ENCODE measurements at regions of chr7 and their contacts with region 1.

Region 1: GRCh38 chr7:129611246-129612111 is at the start of gene NRF1:
- DNase-seq: peak; percentile 77 to 97 (median 85)

Region 2: DNA sequence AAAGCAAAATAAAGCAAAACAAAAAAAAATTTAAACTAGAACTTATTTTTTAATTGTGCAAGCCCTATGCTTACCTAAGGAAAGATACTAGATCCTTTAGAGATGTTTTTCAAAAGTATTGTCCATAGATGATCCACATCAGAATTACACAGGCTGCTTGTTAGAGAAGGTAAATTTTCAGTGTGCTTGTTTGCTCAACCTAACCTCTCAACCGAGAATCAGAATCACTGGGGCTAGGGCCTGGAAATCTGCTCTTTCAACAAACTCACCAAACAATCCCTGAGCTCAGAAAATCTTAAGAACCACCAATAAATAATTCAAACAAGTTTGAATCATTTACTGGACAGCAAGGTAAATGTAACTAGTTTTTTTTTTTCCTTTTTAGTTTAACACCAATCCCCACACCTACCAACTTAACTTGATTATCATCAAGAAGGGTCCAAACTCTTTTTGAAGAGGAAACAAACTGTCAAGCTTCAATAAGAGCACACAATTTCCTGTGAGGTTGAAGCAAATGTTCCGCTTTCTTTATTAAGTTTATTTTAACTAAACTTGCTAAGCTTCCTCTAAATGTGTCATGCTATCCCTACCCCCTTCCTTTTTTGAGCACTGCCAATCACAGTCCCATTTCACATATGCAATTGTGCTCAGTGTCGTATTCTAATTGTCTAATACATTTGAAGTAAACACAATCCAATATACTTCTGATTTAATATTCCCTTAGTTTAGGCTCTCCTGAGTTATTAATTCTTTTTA is 474.4 kb before region 1 on chr7:
- intact Hi-C with region 1: no loop called
- DNase-seq: no peak

Region 3: GRCh38 chr7:129224251-129225205 is 387.0 kb before region 1 on chr7 and contains the start of gene AHCYL2:
- intact Hi-C with region 1: loop called (anchors 10 kb)
- DNase-seq: peak; percentile 94 to 100 (median 98)

Region 4: DNA sequence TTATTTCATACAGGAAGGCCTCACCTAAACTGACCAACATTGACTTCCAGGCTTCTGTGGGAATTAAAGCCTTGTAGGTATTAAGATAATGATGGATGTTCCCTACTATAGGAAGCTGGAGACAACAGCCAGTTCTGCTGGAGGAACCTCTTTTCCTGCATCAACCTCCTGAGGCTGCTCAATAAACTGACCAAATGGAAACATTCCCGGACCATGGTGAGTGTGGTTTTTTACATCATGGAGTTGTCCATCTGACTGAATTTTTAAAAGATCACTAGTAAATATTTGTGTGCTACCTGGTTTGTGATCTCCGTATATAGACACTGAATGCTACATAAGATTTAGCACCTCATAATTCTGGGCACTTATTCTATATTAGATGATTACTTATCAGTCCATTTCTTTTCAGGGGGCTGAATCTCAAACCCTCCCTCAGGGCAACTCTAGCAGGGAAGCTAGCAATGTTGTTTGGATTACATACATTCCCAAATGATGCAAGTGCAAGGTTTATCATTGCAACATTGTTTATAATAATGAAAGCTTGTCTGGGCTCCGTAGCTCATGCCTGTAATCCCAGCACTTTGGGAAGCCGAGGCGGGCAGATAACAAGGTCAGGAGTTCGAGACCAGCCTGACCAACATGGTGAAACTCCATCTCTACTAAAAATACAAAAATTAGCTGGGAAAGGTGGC is 130.7 kb before region 1 on chr7:
- intact Hi-C with region 1: no loop called
- DNase-seq: no peak

Region 5: GRCh38 chr7:129652914-129653313 is 41.4 kb after region 1 on chr7:
- intact Hi-C with region 1: no loop called
- DNase-seq: no peak

Measured in posterior cingulate gyrus (tissue), 11 donors.